ENCODE measurements at regions of chr11 and their contacts with region 1.

Region 1: GRCh38 chr11:124934862-124935547 is 842 bp downstream of the HEPACAM start:
- DNase-seq: no peak

Region 2: GRCh38 chr11:124875943-124876817 is 58.8 kb before region 1 on chr11:
- intact Hi-C with region 1: loop called (anchors 5 kb)
- DNase-seq: peak; percentile 71 to 97 (median 82)